Mammary epithelial cell (primary cell): ENCODE measurements at regions of chr5 and their contacts with region 1.

Region 1: GRCh38 chr5:58022055-58022454 is 437.8 kb downstream of the PLK2 start:
- DNase-seq: no peak
- H3K4me3 ChIP-seq: no peak overlapping the region
- H3K27ac ChIP-seq: no peak overlapping the region
- H3K4me1 ChIP-seq: peaks cover under 1% of the 10 kb centered on the region
- H3K27me3 ChIP-seq: no peaks in the 10 kb centered on the region
- CTCF ChIP-seq: no peak

Region 2: GRCh38 chr5:58037899-58038298 is 15.8 kb after region 1 on chr5:
- CTCF ChIA-PET with region 1: no interaction called
- dilution Hi-C with region 1: no loop called
- in situ Hi-C with region 1: no loop called
- intact Hi-C with region 1: loop called (anchors 1 kb)
- DNase-seq: no peak
- H3K4me3 ChIP-seq: no peak overlapping the region
- H3K27ac ChIP-seq: no peak overlapping the region
- H3K4me1 ChIP-seq: peaks cover 14% of the 10 kb centered on the region
- H3K27me3 ChIP-seq: no peaks in the 10 kb centered on the region
- CTCF ChIP-seq: no peak

Region 3: DNA sequence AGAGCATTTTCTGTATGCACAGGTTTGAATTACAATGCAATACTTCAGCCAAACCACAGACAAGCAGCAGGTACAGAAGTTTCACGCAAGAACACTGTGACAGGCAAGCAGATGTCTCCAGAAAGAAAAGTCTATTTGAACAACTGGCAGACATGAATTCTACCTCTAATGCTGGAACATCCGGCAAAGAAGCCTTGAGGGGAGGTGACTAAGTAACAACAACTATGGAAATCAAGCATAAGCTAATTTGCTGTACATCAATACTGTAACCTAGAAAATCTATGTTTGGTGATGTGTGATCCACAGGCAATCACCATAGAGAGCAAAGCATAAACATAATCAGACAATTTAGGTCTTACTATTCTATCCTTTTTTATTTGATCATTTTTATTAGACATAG is 372.3 kb after region 1 on chr5:
- CTCF ChIA-PET with region 1: no interaction called
- dilution Hi-C with region 1: no loop called
- in situ Hi-C with region 1: no loop called
- intact Hi-C with region 1: no loop called
- DNase-seq: peak; percentile 26
- H3K4me3 ChIP-seq: no peak overlapping the region
- H3K27ac ChIP-seq: no peak overlapping the region
- H3K4me1 ChIP-seq: peaks cover 3% of the 10 kb centered on the region
- H3K27me3 ChIP-seq: no peaks in the 10 kb centered on the region
- CTCF ChIP-seq: no peak